ENCODE measurements at regions of chr11 and their contacts with region 1.

Region 1: GRCh38 chr11:111777094-111778046 is 11.2 kb upstream of the PPP2R1B start:
- DNase-seq: peak; percentile 54 to 71
- H3K4me3 ChIP-seq: no peak overlapping the region
- H3K4me3 Mint-ChIP-seq: peak overlapping the region; percentile 4
- H3K27ac Mint-ChIP-seq: peak overlapping the region; percentile 39
- H3K4me1 ChIP-seq: peaks cover 17% of the 10 kb centered on the region
- H3K4me1 Mint-ChIP-seq: peaks cover 17% of the 10 kb centered on the region
- H3K27me3 ChIP-seq: no peaks in the 10 kb centered on the region
- H3K27me3 Mint-ChIP-seq: no peaks in the 10 kb centered on the region
- CTCF ChIP-seq: peak; percentile 95 to 96

Region 2: GRCh38 chr11:111194860-111195568 is 582.4 kb before region 1 on chr11:
- CTCF ChIA-PET with region 1: no interaction called
- POLR2A ChIA-PET with region 1: no interaction called
- intact Hi-C with region 1: no loop called
- DNase-seq: no peak
- H3K4me3 ChIP-seq: no peak overlapping the region
- H3K4me3 Mint-ChIP-seq: no peak overlapping the region
- H3K27ac Mint-ChIP-seq: no peak overlapping the region
- H3K4me1 ChIP-seq: no peaks in the 10 kb centered on the region
- H3K4me1 Mint-ChIP-seq: no peaks in the 10 kb centered on the region
- H3K27me3 ChIP-seq: no peaks in the 10 kb centered on the region; the same call in 1 of the 2 replicates
- H3K27me3 Mint-ChIP-seq: peaks cover 33% of the 10 kb centered on the region
- CTCF ChIP-seq: no peak

Region 3: DNA sequence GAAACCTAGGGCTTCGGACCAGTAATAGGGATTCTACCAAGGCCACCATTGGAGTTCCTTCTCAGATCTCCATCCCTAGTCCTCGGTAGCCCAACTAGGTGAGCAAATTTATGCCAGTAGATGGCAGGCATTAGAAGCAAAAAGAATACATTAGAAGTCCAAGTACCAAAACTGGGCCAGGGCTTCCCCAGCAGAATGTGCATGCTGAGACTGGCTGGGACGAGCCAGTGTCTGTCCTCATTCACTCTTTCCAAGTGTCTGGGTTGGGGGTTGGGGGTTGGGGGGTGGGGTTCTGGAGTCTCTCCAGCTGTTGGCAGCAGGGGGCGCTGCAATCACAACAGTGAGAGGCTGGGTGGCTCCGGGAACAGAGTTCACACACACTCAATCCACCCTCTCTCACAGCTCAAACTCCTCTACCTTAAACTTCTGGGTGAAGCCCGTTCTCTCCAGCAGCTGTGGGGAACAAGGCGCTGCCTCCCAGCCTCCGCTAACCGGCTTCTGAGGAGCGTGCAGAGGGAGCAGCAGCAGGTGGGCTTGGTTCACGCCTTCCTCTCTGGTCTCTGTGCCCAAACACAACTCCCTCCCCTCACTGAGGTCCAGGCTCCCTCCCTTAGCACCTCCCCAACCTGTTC is 322.7 kb before region 1 on chr11:
- CTCF ChIA-PET with region 1: no interaction called
- POLR2A ChIA-PET with region 1: no interaction called
- intact Hi-C with region 1: loop called (anchors 1 kb)
- DNase-seq: peak; percentile 76 to 78
- H3K4me3 ChIP-seq: no peak overlapping the region
- H3K4me3 Mint-ChIP-seq: no peak overlapping the region
- H3K27ac Mint-ChIP-seq: no peak overlapping the region
- H3K4me1 ChIP-seq: peaks cover 12% of the 10 kb centered on the region
- H3K4me1 Mint-ChIP-seq: peaks cover 12% of the 10 kb centered on the region
- H3K27me3 ChIP-seq: no peaks in the 10 kb centered on the region
- H3K27me3 Mint-ChIP-seq: peaks cover 3% of the 10 kb centered on the region
- CTCF ChIP-seq: peak; percentile 64 to 83

Region 4: DNA sequence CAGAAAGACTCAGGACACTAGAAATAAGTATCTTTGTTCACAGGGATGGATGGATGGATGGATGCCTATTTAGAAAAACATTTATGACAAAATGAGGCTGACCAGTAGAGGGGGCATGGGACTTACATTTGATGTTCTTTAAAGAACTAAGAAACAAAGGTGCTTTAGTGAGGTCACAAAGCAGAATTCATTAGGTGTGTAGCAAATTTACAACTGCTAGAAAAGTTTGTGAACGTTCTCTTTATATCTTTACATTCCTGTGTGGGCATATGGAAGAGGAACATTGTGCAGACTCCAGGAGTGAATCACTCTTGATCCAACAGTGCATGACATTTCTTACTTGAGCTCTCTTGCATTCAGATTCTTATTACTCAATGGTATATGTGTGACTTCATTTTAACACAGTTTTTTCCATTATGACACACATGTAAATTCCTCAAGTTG is 191.0 kb before region 1 on chr11:
- CTCF ChIA-PET with region 1: interaction called, 11 read pairs
- POLR2A ChIA-PET with region 1: no interaction called
- intact Hi-C with region 1: loop called (anchors 1 kb)
- DNase-seq: peak in 1 of 2 experiments; percentile 71
- H3K4me3 ChIP-seq: no peak overlapping the region
- H3K4me3 Mint-ChIP-seq: no peak overlapping the region
- H3K27ac Mint-ChIP-seq: no peak overlapping the region
- H3K4me1 ChIP-seq: no peaks in the 10 kb centered on the region
- H3K4me1 Mint-ChIP-seq: no peaks in the 10 kb centered on the region
- H3K27me3 ChIP-seq: no peaks in the 10 kb centered on the region
- H3K27me3 Mint-ChIP-seq: no peaks in the 10 kb centered on the region
- CTCF ChIP-seq: peak; percentile 83 to 91

Region 5: GRCh38 chr11:111737444-111738210 is 39.7 kb before region 1 on chr11:
- CTCF ChIA-PET with region 1: no interaction called
- POLR2A ChIA-PET with region 1: no interaction called
- intact Hi-C with region 1: loop called (anchors 2 kb)
- DNase-seq: no peak
- H3K4me3 ChIP-seq: no peak overlapping the region
- H3K4me3 Mint-ChIP-seq: no peak overlapping the region
- H3K27ac Mint-ChIP-seq: peak overlapping the region; percentile 29
- H3K4me1 ChIP-seq: peaks cover 13% of the 10 kb centered on the region
- H3K4me1 Mint-ChIP-seq: peaks cover 13% of the 10 kb centered on the region
- H3K27me3 ChIP-seq: no peaks in the 10 kb centered on the region
- H3K27me3 Mint-ChIP-seq: no peaks in the 10 kb centered on the region
- CTCF ChIP-seq: no peak

Region 6: DNA sequence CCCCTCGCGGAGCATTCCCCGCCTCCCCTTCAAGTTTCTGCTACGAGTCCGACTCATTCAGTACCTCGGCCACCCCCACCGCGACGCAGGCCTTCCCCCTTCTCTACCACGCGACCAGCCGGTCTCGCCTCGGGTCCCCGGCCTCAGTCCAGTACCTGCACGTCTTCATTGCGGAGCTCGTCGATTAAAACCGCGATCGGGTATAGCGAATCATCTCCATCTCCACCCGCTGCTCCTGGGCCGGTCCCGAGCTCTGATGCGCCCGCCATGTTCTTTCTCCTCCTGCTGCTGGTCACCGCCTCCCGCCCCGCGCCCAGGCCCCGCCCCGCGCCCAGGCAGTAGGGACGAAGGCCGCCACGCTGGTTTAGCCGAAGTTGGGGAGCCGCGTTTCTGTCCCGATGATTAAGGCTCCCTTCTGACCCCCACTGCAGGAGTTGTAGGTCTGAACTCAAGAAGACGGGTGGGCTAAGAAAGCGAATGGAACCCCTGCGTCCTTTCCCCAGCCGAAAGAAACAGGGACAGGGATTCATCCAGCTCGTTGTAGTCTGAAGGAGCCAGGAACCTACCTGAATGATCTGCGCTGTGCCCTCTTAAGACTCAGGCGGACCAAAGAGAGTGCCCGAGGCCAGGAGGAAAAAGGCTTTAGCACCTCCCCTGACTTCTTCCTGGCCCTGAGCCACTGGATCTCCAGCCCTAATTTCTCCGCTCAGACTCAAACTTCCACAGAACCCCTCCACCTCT is 11.1 kb before region 1 on chr11 and contains the start of gene PPP2R1B:
- CTCF ChIA-PET with region 1: interaction called, 46 read pairs
- POLR2A ChIA-PET with region 1: interaction called, 17 read pairs
- intact Hi-C with region 1: loop called (anchors 1 kb)
- DNase-seq: peak; percentile 84 to 85
- H3K4me3 ChIP-seq: peak within 1 kb of the TSS; percentile 61
- H3K4me3 Mint-ChIP-seq: peak within 1 kb of the TSS; percentile 85
- H3K27ac Mint-ChIP-seq: peak within 1 kb of the TSS; percentile 84
- H3K4me1 ChIP-seq: peaks cover 10% of the 10 kb centered on the region
- H3K4me1 Mint-ChIP-seq: peaks cover 22% of the 10 kb centered on the region
- H3K27me3 ChIP-seq: no peaks in the 10 kb centered on the region
- H3K27me3 Mint-ChIP-seq: no peaks in the 10 kb centered on the region
- CTCF ChIP-seq: no peak
- total RNA-seq, gene PPP2R1B: 109 and 114 TPM in 2 replicates

Region 7: DNA sequence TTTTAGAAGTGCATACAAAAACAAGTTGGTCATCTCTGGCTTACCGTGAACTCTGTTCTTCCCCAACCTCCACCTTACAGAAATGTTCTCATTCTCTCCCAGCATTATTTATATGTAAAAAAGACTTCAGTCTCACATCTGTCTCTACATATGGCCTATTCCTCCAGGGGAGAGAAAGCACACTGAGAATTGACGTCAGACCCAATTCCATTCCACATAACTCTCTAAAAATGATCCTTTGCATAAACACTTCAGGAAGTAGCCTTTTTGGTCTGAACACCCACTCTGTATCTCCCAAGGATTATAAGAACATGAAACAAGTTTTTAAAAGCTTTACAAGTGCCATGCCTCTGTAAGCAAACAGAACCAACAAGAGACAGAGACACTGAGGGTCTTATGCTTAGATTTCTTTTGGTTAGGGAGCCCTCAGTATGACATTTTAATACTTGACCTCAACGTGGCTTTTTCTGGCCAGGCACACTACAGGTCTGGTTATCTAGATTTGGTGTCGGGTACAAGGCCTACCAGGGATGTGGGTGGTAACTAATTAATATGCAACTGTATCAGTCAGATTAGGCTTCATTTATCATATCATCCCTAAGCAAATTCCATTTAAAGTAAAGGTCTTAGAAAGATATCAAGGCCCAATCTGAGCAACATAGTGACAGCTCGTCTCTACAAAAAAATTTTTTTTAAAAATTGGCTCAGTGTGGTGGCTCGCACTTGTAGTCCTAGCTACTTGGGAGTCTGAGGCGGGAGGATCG is 37.4 kb after region 1 on chr11:
- CTCF ChIA-PET with region 1: no interaction called
- POLR2A ChIA-PET with region 1: no interaction called
- intact Hi-C with region 1: no loop called
- DNase-seq: no peak
- H3K4me3 ChIP-seq: no peak overlapping the region
- H3K4me3 Mint-ChIP-seq: no peak overlapping the region
- H3K27ac Mint-ChIP-seq: no peak overlapping the region
- H3K4me1 ChIP-seq: peaks cover 4% of the 10 kb centered on the region; the same call in 1 of the 2 replicates
- H3K4me1 Mint-ChIP-seq: peaks cover 8% of the 10 kb centered on the region
- H3K27me3 ChIP-seq: no peaks in the 10 kb centered on the region
- H3K27me3 Mint-ChIP-seq: no peaks in the 10 kb centered on the region
- CTCF ChIP-seq: no peak

Region 8: DNA sequence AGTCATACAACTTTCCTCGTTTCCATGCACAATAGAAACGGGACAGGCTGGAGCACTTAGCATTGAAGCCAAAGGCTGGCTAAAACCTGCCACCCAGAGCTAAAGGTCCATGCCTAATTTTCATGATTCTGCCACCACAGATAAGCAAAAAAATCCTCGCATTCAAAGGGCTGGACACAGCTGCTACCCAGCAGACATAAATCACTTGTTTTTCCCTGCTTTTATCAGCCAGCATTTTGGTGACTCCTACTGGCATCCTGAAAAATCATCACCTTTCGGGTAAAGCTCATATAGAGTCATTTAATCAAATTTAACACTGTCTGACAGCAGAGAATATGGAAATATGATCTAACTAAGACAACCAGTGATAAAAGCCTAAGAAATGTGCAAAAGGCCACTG is 56.2 kb after region 1 on chr11:
- CTCF ChIA-PET with region 1: interaction called, 13 read pairs
- POLR2A ChIA-PET with region 1: no interaction called
- intact Hi-C with region 1: loop called (anchors 1 kb)
- DNase-seq: peak in 1 of 2 experiments; percentile 25
- H3K4me3 ChIP-seq: no peak overlapping the region
- H3K4me3 Mint-ChIP-seq: no peak overlapping the region
- H3K27ac Mint-ChIP-seq: no peak overlapping the region
- H3K4me1 ChIP-seq: peaks cover 9% of the 10 kb centered on the region; the same call in 1 of the 2 replicates
- H3K4me1 Mint-ChIP-seq: peaks cover 11% of the 10 kb centered on the region
- H3K27me3 ChIP-seq: no peaks in the 10 kb centered on the region
- H3K27me3 Mint-ChIP-seq: no peaks in the 10 kb centered on the region
- CTCF ChIP-seq: peak; percentile 24 to 42